ENCODE measurements at regions of chr11 and their contacts with region 1.

Region 1: DNA sequence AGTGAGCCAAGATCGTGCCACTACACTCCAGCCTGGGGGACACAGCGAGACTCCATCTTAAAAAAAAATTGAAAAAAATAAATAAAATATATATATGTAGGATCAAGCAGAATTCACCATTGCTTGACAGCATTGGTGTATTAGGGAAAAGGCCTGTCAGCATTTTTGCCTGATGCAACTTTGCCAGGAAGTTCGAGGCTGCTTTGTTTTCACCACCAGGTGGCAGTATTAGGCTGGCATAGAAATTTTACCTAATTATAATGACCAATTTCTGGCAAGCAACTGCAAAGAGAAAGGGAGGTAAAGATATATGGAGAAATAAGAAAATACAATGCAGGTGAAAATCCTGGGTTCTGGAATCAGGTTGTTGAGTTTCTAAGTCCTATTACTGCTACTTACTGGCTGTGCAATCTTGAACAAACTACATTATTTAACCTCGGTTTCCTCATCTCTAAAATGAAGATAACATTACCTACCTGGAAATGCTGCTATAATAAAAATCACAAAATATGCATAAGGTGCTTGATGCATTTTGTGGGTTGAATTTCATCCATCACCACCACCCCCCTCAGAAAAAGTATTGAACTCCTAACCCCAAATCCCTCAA is 24.7 kb downstream of the LAYN start:
- DNase-seq: peak; percentile 81
- H3K4me3 ChIP-seq: no peak overlapping the region
- H3K27ac ChIP-seq: no peak overlapping the region
- H3K4me1 ChIP-seq: no peaks in the 10 kb centered on the region
- H3K27me3 ChIP-seq: no peaks in the 10 kb centered on the region
- CTCF ChIP-seq: peak; percentile 88 to 98 (median 90)
- POLR2A ChIP-seq: no peak

Region 2: GRCh38 chr11:111718436-111718835 is 153.2 kb after region 1 on chr11:
- intact Hi-C with region 1: no loop called
- DNase-seq: no peak
- H3K4me3 ChIP-seq: no peak overlapping the region
- H3K27ac ChIP-seq: no peak overlapping the region
- H3K4me1 ChIP-seq: no peaks in the 10 kb centered on the region
- H3K27me3 ChIP-seq: no peaks in the 10 kb centered on the region
- CTCF ChIP-seq: no peak
- POLR2A ChIP-seq: no peak

Region 3: DNA sequence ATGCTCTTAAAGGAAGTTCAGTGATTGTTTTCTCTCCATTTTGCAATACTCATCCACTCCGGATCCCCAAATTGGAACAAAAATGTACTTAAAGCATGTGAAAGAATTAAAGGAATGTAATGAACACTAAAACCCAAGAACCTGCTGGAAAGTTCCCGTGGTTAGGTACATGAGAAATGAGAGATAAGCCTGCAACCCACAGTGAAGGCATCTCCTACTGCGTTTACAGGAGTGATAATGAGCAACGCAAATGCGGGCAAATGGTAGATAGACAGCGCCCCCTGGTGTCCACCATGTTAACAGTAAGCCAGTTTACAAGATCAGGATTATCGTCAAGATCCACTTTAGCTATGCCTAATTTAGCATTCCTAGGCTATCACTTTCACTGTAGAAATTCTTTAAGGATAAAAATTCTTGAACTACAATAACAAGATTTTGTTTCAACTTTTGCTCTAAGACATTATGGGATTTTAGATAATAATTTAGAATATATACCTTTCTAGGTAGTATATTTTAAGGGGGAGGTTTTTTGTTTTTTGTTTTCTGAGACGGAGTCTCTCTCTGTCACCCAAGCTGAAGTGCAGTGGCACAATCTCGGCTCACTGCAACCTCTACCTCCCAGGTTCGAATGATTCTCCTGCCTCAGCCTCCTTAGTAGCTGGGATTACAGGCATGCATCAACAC is 276.3 kb after region 1 on chr11:
- intact Hi-C with region 1: loop called (anchors 10 kb)
- DNase-seq: peak; percentile 96
- H3K4me3 ChIP-seq: no peak overlapping the region
- H3K27ac ChIP-seq: no peak overlapping the region
- H3K4me1 ChIP-seq: no peaks in the 10 kb centered on the region
- H3K27me3 ChIP-seq: no peaks in the 10 kb centered on the region
- CTCF ChIP-seq: peak; percentile 94 to 96 (median 95)
- POLR2A ChIP-seq: no peak

Measured in testis (tissue), 5 donors.